ENCODE measurements at regions of chr3 and their contacts with region 1.

Region 1: DNA sequence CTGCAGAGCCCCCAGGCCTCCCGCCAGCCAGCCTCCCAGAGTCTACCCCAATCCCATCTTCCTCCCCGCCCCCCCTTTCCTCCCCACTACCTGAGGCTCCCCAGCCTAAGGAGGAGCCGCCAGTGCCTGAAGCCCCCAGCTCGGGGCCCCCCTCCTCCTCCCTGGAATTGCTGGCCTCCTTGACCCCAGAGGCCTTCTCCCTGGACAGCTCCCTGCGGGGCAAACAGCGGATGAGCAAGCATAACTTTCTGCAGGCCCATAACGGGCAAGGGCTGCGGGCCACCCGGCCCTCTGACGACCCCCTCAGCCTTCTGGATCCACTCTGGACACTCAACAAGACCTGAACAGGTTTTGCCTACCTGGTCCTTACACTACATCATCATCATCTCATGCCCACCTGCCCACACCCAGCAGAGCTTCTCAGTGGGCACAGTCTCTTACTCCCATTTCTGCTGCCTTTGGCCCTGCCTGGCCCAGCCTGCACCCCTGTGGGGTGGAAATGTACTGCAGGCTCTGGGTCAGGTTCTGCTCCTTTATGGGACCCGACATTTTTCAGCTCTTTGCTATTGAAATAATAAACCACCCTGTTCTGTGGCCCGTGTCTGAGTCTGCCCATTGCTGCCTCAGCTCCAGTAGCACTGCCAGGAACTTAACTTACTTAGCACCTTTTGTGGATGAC is 32.2 kb downstream of the PTPN23 start:
- DNase-seq: no peak
- H3K4me3 ChIP-seq: no peak overlapping the region
- H3K27ac ChIP-seq: peak overlapping the region in 1 of 2 donors; percentile 69
- H3K4me1 ChIP-seq: peaks cover 0 to 6% of the 10 kb centered on the region in 2 donors
- H3K27me3 ChIP-seq: no peaks in the 10 kb centered on the region
- CTCF ChIP-seq: no peak
- POLR2A ChIP-seq: no peak

Region 2: DNA sequence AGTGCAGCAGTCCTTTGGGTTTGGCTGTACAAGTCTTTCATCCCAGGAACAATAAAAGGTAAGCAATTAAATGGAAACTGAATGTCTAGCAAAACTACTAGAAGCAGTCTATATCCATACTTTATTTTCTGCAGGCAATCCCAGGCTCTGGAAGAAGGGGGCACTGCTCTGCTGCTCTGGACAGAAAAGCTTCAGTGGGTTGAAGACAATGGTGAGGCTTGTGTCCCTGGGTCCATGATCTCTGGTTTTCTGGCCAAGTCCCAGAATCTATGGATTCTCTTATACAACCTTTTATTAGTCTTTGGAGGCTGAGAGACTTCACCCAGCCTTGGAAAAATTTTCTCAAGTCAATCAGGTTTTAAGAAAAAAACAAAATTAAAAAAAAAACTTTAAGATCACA is 27.1 kb after region 1 on chr3:
- intact Hi-C with region 1: loop called (anchors 1 kb)
- DNase-seq: peak in 1 of 2 donors; percentile 7
- H3K4me3 ChIP-seq: no peak overlapping the region
- H3K27ac ChIP-seq: no peak overlapping the region
- H3K4me1 ChIP-seq: peaks cover 0 to 18% of the 10 kb centered on the region in 2 donors
- H3K27me3 ChIP-seq: no peaks in the 10 kb centered on the region
- CTCF ChIP-seq: no peak
- POLR2A ChIP-seq: no peak